ENCODE measurements at regions of chr11 and their contacts with region 1.

Region 1: DNA sequence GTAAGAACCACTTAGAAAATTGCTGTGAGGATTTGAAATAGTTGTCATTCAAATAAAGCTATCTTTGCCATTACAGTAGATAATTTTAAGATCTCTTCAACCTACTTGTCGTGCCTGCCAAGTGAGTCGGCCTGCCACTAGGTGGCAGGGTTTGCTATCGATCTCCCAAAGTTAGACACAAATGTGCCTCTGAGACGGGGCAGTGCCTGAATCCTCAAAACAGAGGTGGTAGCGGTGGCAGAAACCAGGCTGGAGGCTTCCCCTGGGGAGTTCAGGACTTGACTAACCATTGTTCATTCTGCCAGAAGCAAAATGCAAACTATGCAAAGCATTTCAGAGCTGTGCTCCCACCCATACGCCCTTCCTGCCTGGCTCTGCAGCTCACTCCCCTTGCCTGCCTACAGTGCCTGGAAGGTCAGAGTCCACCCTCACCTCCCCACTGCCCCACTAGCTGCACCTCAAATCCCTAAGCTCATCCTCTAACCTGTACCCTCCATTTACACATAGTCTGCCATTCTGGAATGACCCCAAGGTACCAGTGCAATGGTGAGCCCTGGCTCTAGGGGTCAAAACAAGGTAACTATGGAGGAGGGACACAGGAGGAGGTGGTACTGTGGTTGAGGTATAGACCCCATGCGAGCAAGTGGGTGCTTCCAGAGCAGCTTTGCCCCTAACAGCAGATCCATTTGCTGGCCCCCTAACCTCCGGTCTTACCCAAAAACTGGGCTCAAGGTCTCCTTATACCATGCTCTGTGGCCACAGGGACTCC is 82.1 kb downstream of the C11orf58 start:
- DNase-seq: peak in 6 of 9 donors; percentile 6 to 30 (median 21)
- ATAC-seq: peak; percentile 64
- H3K4me3 ChIP-seq: no peak overlapping the region
- H3K4me3 Mint-ChIP-seq: no peak overlapping the region
- H3K27ac ChIP-seq: no peak overlapping the region
- H3K27ac Mint-ChIP-seq: no peak overlapping the region
- H3K4me1 ChIP-seq: no peaks in the 10 kb centered on the region
- H3K4me1 Mint-ChIP-seq: peaks cover 0 to 8% (median 0%) of the 10 kb centered on the region in 7 donors
- H3K27me3 ChIP-seq: no peaks in the 10 kb centered on the region
- H3K27me3 Mint-ChIP-seq: peaks cover 0 to 5% (median 0%) of the 10 kb centered on the region in 5 donors

Region 2: DNA sequence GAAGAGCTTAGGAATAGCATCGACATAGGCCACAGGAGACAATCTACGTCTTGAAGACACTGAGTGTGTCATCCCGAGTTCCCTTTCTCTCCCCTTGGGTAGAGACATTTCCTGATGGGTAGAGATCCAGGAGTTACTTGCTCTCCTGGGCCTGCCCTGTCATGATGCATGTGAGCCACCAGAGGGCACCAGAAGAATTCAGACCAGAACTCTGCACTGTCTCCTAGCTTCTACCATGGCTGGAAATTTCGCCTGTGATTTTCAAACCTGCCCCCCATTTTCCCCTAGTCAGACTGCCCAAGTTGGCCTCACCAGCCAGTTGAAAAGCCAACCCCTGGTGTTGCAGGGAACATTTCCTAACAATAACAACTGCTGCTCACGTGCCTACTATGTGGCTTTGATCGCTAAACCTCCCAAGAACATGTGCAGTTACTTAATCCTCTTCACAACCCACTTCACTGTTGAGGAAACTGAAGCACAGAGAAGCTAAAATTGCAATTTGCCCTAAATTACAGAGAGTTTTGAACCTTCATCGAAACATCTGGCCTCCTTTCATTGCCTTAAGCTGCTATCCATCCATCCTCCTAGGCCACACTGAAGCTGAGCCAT is 34.9 kb before region 1 on chr11:
- CTCF ChIA-PET with region 1: no interaction called
- POLR2A ChIA-PET with region 1: no interaction called
- intact Hi-C with region 1: loop called in 1 of 2 experiments (anchors 1 kb)
- DNase-seq: peak in 6 of 9 donors; percentile 24 to 50 (median 40)
- ATAC-seq: peak; percentile 83
- H3K4me3 ChIP-seq: no peak overlapping the region
- H3K4me3 Mint-ChIP-seq: no peak overlapping the region
- H3K27ac ChIP-seq: no peak overlapping the region
- H3K27ac Mint-ChIP-seq: no peak overlapping the region
- H3K4me1 ChIP-seq: no peaks in the 10 kb centered on the region
- H3K4me1 Mint-ChIP-seq: no peaks in the 10 kb centered on the region
- H3K27me3 ChIP-seq: no peaks in the 10 kb centered on the region
- H3K27me3 Mint-ChIP-seq: no peaks in the 10 kb centered on the region

Region 3: DNA sequence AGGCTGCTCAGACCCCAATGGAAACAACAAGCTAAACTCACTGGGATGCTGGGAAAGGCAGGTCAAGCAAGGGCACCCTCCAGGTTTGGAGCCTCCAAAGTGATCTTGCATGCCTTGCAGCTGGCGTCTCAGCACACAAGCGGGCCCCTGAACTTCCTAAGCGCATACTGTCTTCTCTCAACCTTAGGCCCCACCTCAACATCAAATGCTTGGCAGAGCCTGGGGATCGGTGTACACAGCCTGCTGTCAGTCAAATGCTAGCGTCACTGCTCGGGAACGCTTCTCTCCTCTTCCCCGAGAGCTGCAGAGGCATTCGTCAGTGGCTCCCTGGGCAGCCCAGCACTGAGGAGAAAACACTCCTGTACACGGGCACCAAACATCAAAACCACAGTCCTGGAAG is 42.8 kb after region 1 on chr11:
- CTCF ChIA-PET with region 1: no interaction called
- POLR2A ChIA-PET with region 1: no interaction called
- intact Hi-C with region 1: no loop called
- DNase-seq: no peak
- ATAC-seq: no peak
- H3K4me3 ChIP-seq: no peak overlapping the region
- H3K4me3 Mint-ChIP-seq: no peak overlapping the region
- H3K27ac ChIP-seq: no peak overlapping the region
- H3K27ac Mint-ChIP-seq: no peak overlapping the region
- H3K4me1 ChIP-seq: no peaks in the 10 kb centered on the region
- H3K4me1 Mint-ChIP-seq: peaks cover 0 to 10% (median 0%) of the 10 kb centered on the region in 7 donors
- H3K27me3 ChIP-seq: no peaks in the 10 kb centered on the region
- H3K27me3 Mint-ChIP-seq: peaks cover 0 to 4% (median 0%) of the 10 kb centered on the region in 5 donors

Measured in naive thymus-derived CD4-positive, alpha-beta T cell (primary cell).